Heart left ventricle (tissue), 16 donors: ENCODE measurements at regions of chr20 and their contacts with region 1.

Region 1: GRCh38 chr20:37384683-37385174 is 38.8 kb downstream of the SRC start:
- DNase-seq: peak; percentile 56 to 86 (median 72)
- ATAC-seq: peak in 3 of 4 donors; percentile 80 to 88 (median 83)
- H3K4me3 ChIP-seq: peak overlapping the region; percentile 38 to 64 (median 56)
- H3K27ac ChIP-seq: peak overlapping the region in 6 of 12 donors; percentile 27 to 51 (median 42)
- H3K4me1 ChIP-seq: peaks cover 0 to 22% (median 3%) of the 10 kb centered on the region in 12 donors
- H3K27me3 ChIP-seq: no peaks in the 10 kb centered on the region
- CTCF ChIP-seq: peak; percentile 82 to 95 (median 90)
- POLR2A ChIP-seq: no peak

Region 2: DNA sequence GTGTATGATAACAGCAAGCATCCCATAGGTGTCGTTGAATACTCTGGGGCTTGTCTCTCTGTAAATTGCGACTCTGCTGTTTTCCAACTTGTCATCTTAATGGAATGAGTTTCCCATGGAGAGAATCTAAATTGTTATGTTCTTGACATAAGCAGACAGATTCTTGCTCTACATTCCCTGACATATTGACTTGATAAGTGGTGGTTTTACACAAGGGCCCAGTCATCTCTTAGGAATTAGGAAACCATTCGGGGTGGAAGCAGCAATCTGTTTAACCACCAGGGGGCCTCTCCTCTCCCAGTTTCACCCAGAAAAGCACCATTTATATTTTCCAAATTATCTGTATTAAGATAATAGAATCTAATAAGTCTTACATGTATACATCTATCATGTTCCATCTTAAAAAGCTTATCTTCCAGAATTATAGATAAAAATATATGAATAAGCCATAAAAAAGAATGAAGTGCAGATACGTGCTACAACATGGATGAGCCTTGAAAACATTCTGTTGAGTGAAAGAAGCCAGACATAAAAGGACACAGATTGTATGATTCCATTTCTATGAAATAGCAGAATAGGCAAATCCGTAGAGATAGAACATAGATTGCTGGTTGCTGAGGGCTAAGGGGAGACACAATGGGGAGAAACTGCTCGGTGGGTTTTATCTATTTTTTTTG is 182.3 kb before region 1 on chr20:
- intact Hi-C with region 1: loop called in 7 of 10 experiments (anchors 5 to 10 kb)
- DNase-seq: no peak
- ATAC-seq: peak in 3 of 4 donors; percentile 40 to 81 (median 62)
- H3K4me3 ChIP-seq: no peak overlapping the region
- H3K27ac ChIP-seq: peak overlapping the region in 4 of 12 donors; percentile 5 to 44 (median 30)
- H3K4me1 ChIP-seq: peaks cover 0 to 12% (median 0%) of the 10 kb centered on the region in 12 donors
- H3K27me3 ChIP-seq: no peaks in the 10 kb centered on the region
- CTCF ChIP-seq: peak; percentile 61 to 84 (median 73)
- POLR2A ChIP-seq: no peak

Region 3: DNA sequence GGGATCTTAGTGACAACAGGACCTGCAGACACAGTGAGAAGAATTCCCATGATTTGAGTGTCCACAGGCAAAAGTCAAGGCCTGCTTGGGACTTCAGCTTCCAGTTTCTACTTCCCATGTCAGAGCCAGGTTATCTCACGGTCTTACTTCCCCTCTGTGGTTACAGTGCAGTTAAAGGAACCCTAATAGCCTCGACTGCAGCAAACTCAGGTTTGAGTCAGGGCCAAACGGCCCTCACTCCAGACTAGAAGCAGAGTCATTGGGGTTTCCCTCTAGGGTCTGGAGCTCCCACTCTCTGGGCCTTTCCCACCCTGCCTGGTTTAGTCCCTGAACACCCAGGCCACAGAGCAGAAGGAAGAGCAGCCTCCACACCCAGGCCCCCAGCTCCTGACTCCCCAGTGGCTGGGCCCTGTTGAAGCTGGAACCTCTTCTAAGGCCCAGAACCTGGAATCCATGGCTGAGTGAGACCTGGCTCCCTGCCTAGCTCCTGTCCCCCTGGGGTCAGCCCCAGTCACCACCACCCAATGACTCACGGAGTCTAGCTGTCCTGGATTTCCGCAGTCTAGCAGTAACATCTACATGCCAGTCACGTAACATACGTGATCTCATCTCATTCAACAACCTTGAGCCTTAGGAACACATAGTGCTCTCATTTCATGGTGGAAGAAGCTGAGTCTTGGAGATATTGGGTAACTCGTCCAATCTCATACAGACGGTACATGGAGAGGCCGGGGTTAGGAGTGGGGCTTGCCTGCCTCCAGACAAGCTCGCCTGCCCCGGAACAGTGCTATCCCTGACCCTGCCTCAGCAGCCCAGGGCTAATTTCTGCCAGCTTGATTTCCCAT is 113.9 kb before region 1 on chr20:
- intact Hi-C with region 1: loop called in 9 of 10 experiments (anchors 2 to 5 kb)
- DNase-seq: no peak
- ATAC-seq: peak in 3 of 4 donors; percentile 35 to 65 (median 46)
- H3K4me3 ChIP-seq: no peak overlapping the region
- H3K27ac ChIP-seq: peak overlapping the region in 2 of 12 donors; percentile 17 to 84
- H3K4me1 ChIP-seq: peaks cover 0 to 28% (median 0%) of the 10 kb centered on the region in 12 donors
- H3K27me3 ChIP-seq: peaks cover 0 to 3% (median 0%) of the 10 kb centered on the region in 9 donors
- CTCF ChIP-seq: no peak
- POLR2A ChIP-seq: no peak

Region 4: DNA sequence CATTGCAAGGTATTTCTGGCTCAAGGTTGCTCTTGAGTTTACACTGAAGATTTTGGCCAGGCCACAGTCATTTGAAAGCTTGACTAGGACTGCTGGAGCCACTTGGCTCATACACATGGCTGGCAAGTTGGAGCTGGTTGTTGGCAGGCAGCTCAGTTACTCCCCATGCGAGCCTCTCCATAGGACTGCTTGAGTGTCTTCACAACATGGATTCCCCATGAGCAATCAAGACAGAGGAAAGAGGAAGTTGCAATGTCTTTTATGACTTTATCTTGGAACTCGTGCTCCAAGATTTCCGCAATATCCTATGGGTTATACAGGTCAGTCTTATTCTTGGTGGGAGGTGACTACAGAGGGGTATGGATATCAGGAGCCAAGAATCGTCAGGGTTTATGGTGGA is 96.6 kb before region 1 on chr20:
- intact Hi-C with region 1: loop called in 1 of 10 experiments (anchors 5 kb)
- DNase-seq: no peak
- ATAC-seq: no peak
- H3K4me3 ChIP-seq: no peak overlapping the region
- H3K27ac ChIP-seq: peak overlapping the region in 1 of 12 donors; percentile 97
- H3K4me1 ChIP-seq: peaks cover 0 to 41% (median 9%) of the 10 kb centered on the region in 12 donors
- H3K27me3 ChIP-seq: no peaks in the 10 kb centered on the region
- CTCF ChIP-seq: no peak
- POLR2A ChIP-seq: no peak

Region 5: GRCh38 chr20:37463726-37464494 is 79.2 kb after region 1 on chr20:
- intact Hi-C with region 1: no loop called
- DNase-seq: no peak
- ATAC-seq: no peak
- H3K4me3 ChIP-seq: no peak overlapping the region
- H3K27ac ChIP-seq: no peak overlapping the region
- H3K4me1 ChIP-seq: no peaks in the 10 kb centered on the region
- H3K27me3 ChIP-seq: no peaks in the 10 kb centered on the region
- CTCF ChIP-seq: no peak
- POLR2A ChIP-seq: no peak